Mammary epithelial cell (primary cell): ENCODE measurements at regions of chr3 and their contacts with region 1.

Region 1: DNA sequence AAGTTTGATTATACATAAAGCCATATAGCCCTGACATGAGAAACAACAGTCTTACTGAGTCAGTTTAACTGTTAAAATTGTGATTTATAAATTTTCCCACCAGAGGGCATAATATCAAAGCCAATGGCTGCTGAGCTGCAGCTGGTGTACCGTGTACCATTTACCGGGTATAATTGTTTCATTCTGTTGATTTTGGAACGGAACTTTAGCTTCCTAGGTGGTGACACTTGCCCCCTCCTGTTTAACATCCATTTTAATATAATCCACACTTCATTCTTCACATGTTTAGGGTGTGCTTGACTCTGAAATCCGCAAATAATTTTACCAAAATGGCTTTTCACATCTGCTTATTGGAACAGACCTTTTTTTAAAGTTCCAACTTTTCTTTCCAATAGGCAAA is 72.8 kb downstream of the SLC9A9 start:
- DNase-seq: peak; percentile 44
- H3K4me3 ChIP-seq: no peak overlapping the region
- H3K27ac ChIP-seq: no peak overlapping the region
- H3K4me1 ChIP-seq: peaks cover 9% of the 10 kb centered on the region
- H3K27me3 ChIP-seq: no peaks in the 10 kb centered on the region
- CTCF ChIP-seq: peak; percentile 43 to 61

Region 2: DNA sequence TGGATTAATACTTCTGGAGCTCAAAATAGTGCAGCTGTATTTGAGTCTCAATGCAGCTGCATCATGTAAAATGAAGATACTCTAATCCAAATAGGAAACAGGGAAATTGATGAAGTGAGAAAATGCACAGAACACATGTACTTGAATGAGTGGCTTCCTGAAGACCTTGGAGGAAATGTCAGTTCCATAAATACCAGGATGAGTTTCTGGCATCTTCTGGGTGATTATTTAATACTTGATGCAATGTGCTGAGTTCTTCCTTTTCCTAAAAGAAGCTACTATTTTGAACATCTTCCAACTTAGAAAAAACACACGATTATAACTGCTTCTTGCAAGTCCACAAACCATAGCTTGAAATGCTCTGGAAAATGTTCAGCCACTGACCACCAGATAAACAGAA is 90.0 kb before region 1 on chr3:
- CTCF ChIA-PET with region 1: no interaction called
- dilution Hi-C with region 1: no loop called
- in situ Hi-C with region 1: no loop called
- intact Hi-C with region 1: no loop called
- DNase-seq: no peak
- H3K4me3 ChIP-seq: no peak overlapping the region
- H3K27ac ChIP-seq: no peak overlapping the region
- H3K4me1 ChIP-seq: peaks cover 7% of the 10 kb centered on the region
- H3K27me3 ChIP-seq: no peaks in the 10 kb centered on the region
- CTCF ChIP-seq: no peak

Region 3: GRCh38 chr3:143951351-143951971 is 176.0 kb after region 1 on chr3:
- CTCF ChIA-PET with region 1: no interaction called
- dilution Hi-C with region 1: no loop called
- in situ Hi-C with region 1: no loop called
- intact Hi-C with region 1: loop called (anchors 1 kb)
- DNase-seq: peak; percentile 28
- H3K4me3 ChIP-seq: no peak overlapping the region
- H3K27ac ChIP-seq: no peak overlapping the region
- H3K4me1 ChIP-seq: no peaks in the 10 kb centered on the region
- H3K27me3 ChIP-seq: no peaks in the 10 kb centered on the region
- CTCF ChIP-seq: peak; percentile 71 to 85

Region 4: DNA sequence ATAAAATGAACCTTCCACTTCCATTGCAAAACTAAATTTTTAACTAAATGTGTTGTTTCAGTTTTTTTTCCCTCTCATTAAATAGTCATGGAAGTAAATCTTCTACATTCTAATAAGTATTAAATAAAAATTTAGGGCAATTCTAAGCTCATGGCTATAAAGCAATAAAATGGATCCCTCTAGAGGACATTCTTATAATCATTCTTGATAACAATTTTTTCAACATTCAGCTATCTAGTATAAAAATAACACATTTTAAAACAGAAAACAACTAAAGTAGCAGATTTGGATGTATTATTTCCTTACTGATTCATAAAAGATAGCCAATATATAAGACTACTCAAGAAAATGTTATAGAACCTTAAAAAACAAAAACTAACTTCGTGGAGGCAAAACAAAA is 1992.5 kb after region 1 on chr3:
- CTCF ChIA-PET with region 1: no interaction called
- dilution Hi-C with region 1: no loop called
- in situ Hi-C with region 1: no loop called
- intact Hi-C with region 1: loop called (anchors 10 kb)
- DNase-seq: no peak
- H3K4me3 ChIP-seq: no peak overlapping the region
- H3K27ac ChIP-seq: no peak overlapping the region
- H3K4me1 ChIP-seq: no peaks in the 10 kb centered on the region
- H3K27me3 ChIP-seq: peaks cover 1% of the 10 kb centered on the region
- CTCF ChIP-seq: peak in 1 of 2 donors; percentile 39